ENCODE measurements at regions of chr7 and their contacts with region 1.

Region 1: DNA sequence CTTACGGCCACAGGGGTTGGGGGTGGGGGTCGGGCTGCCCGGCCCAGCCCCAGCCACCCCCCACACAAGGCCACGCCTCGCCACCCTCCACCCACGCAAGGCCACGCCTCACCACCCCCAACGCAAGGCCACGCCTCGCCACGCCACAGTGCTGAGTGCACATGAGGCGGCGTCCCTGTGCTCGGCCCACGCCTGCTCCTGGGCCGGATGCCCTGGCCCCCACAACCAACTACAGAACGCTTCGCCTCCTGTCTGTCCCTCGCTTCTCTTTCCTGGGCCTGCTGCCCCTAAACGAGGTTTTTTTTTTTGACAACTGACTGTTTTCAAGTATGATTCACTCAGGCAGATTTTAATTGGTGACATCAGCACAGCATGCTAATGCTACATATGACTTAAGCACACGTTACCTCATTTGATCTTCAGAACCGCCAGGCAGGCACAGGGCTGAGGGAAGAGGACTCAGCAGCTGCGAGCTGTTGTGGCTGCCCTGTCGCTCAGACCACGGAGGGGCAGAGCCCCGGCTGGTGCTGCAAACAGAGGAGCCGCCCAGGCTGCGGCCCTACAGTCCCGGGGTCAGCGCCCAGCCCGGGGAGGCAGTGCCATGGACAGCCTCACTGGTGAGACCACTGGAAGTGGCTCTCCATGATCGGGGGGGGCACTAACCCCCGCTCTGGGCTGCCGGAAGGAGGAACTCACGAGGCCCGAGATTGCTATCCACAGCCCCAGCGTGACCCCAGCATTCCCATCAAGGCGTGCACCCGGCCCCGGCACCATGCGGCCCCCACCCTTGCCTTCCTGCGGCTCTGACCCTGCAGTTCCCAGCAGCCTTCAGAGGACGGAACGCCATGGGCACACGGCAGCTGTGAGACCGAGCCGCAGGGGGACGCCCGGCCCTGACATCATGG is 212.9 kb downstream of the MAD1L1 start:
- DNase-seq: no peak
- ATAC-seq: no peak
- H3K4me3 ChIP-seq: no peak overlapping the region
- H3K27ac ChIP-seq: no peak overlapping the region
- H3K4me1 ChIP-seq: peaks cover 5 to 24% of the 10 kb centered on the region in 2 experiments
- H3K27me3 ChIP-seq: no peaks in the 10 kb centered on the region
- CTCF ChIP-seq: no peak
- POLR2A ChIP-seq: no peak
- RAD21 ChIP-seq: no peak

Region 2: GRCh38 chr7:2072042-2072441 is 52.2 kb after region 1 on chr7:
- CTCF ChIA-PET with region 1: no interaction called
- POLR2A ChIA-PET with region 1: no interaction called
- RAD21 ChIA-PET with region 1: no interaction called
- intact Hi-C with region 1: loop called (anchors 10 kb)
- DNase-seq: no peak
- ATAC-seq: no peak
- H3K4me3 ChIP-seq: no peak overlapping the region
- H3K27ac ChIP-seq: no peak overlapping the region
- H3K4me1 ChIP-seq: no peaks in the 10 kb centered on the region
- H3K27me3 ChIP-seq: no peaks in the 10 kb centered on the region
- CTCF ChIP-seq: no peak
- POLR2A ChIP-seq: no peak
- RAD21 ChIP-seq: no peak